ENCODE measurements at regions of chr4 and their contacts with region 1.

Region 1: GRCh38 chr4:74228691-74229640 is 71.0 kb downstream of the MTHFD2L start:
- DNase-seq: peak; percentile 83
- H3K4me3 Mint-ChIP-seq: no peak overlapping the region
- H3K27ac Mint-ChIP-seq: no peak overlapping the region
- H3K4me1 Mint-ChIP-seq: peaks cover 5% of the 10 kb centered on the region
- H3K27me3 Mint-ChIP-seq: no peaks in the 10 kb centered on the region

Region 2: GRCh38 chr4:74117024-74117534 is 111.9 kb before region 1 on chr4:
- CTCF ChIA-PET with region 1: no interaction called
- DNase-seq: no peak
- H3K4me3 Mint-ChIP-seq: no peak overlapping the region
- H3K27ac Mint-ChIP-seq: no peak overlapping the region
- H3K4me1 Mint-ChIP-seq: no peaks in the 10 kb centered on the region
- H3K27me3 Mint-ChIP-seq: no peaks in the 10 kb centered on the region

Region 3: DNA sequence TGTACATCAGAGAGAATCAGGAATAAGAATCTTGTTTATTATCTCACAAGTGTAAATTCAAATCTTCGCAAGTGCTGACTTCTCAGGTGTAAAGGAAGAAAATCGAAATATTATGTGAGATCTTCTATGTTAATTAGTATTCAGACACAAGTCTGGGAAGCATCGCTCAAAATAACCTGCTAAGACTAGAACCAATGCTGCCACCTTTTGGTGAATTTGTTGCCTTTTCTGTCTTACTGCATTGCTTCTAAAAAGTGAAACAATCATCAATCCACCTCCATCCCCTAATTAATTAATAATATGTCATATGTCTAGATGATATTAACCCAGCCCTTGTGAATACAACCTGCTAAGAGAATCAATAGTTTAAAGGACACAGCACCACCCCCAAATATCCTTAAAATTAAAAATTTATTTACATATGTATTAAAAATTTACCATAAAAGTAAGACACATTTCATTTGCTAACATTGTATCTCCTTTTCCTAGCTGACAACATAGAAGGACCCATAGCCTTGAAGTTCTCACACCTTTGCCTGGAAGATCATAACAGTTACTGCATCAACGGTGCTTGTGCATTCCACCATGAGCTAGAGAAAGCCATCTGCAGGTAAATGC is 82.8 kb after region 1 on chr4:
- CTCF ChIA-PET with region 1: interaction called, 16 read pairs
- DNase-seq: peak; percentile 29
- H3K4me3 Mint-ChIP-seq: no peak overlapping the region
- H3K27ac Mint-ChIP-seq: no peak overlapping the region
- H3K4me1 Mint-ChIP-seq: peaks cover 8% of the 10 kb centered on the region
- H3K27me3 Mint-ChIP-seq: no peaks in the 10 kb centered on the region